CD14-positive monocyte (primary cell): ENCODE measurements at regions of chr10 and their contacts with region 1.

Region 1: GRCh38 chr10:113326160-113327111 is 226.4 kb upstream of the HABP2 start:
- DNase-seq: peak; percentile 83 to 98 (median 93)
- H3K4me3 ChIP-seq: no peak overlapping the region
- H3K4me3 Mint-ChIP-seq: no peak overlapping the region
- H3K27ac ChIP-seq: peak overlapping the region in 1 of 2 donors; percentile 44
- H3K27ac Mint-ChIP-seq: peak overlapping the region in 6 of 7 donors; percentile 33 to 85 (median 72)
- H3K4me1 ChIP-seq: peaks cover 42 to 44% of the 10 kb centered on the region in 2 donors
- H3K4me1 Mint-ChIP-seq: peaks cover 45% of the 10 kb centered on the region
- H3K27me3 ChIP-seq: no peaks in the 10 kb centered on the region
- H3K27me3 Mint-ChIP-seq: peaks cover 0 to 3% (median 0%) of the 10 kb centered on the region in 3 donors
- CTCF ChIP-seq: peak; percentile 49

Region 2: DNA sequence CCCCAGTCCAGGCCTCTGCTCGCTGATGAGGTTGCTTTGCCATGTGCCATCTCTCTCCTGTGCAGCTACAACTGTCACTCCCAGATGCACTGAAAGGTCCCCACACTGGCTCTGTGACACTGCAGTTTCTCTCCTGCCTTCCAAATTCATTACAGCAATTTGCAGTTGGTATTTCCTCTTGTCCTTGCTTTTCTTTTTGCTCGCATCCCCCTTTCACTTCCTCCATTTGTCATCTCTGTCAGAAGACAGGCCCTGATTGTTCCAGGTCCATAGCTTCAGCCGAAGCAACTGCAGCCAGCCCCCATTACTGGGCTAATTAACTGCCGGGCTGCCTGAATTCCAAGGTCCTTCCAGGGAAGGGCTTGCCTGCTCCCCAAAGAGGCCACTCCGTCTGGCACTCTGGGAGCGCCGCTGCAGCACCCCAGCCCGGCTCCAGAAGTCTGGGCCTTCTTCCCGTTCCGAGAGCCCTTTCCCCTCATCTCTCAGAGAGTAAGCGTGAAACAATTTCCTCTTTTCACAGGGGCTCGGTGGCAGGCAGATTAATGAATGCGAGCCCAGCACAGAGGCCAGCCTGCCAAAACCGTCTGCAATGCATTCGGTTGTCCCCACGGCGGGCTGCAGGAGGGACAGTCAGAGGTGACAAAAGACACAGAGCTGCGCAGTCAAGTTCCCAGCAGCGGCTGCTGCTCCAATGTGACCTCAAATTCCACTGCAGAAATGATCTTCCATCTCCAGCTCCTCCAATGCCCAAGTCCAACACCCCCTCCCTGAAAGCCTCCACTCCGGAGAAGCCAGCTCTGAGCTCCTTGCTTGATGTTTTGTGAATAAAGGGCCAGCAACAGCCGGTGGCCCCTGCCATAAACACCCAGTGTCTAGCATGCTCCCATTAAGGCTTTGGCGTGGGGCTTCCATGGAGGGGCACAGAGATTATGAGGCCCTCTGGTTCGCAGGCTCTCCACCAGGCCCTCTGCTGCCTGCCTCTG is 53.0 kb before region 1 on chr10:
- intact Hi-C with region 1: loop called (anchors 5 to 10 kb)
- DNase-seq: peak; percentile 69 to 77 (median 74)
- H3K4me3 ChIP-seq: peak overlapping the region in 2 of 3 experiments; percentile 1 to 59
- H3K4me3 Mint-ChIP-seq: peak overlapping the region; percentile 67 to 89
- H3K27ac ChIP-seq: peak overlapping the region; percentile 73 to 86
- H3K27ac Mint-ChIP-seq: peak overlapping the region; percentile 89 to 96 (median 93)
- H3K4me1 ChIP-seq: peaks cover 40 to 49% of the 10 kb centered on the region in 2 donors
- H3K4me1 Mint-ChIP-seq: peaks cover 49% of the 10 kb centered on the region
- H3K27me3 ChIP-seq: no peaks in the 10 kb centered on the region
- H3K27me3 Mint-ChIP-seq: no peaks in the 10 kb centered on the region
- CTCF ChIP-seq: no peak